Activated CD4-positive, alpha-beta memory T cell treated with anti-CD3 and anti-CD28 coated beads for 36 hours (primary cell): ENCODE measurements at regions of chr12 and their contacts with region 1.

Region 1: GRCh38 chr12:54279866-54280467 is at the start of gene CBX5:
- DNase-seq: peak; percentile 99
- H3K4me3 Mint-ChIP-seq: no peak within 1 kb of the TSS
- H3K27ac Mint-ChIP-seq: no peak within 1 kb of the TSS
- H3K4me1 Mint-ChIP-seq: peaks cover 51% of the 10 kb centered on the region
- H3K27me3 Mint-ChIP-seq: no peaks in the 10 kb centered on the region
- total RNA-seq, gene CBX5: 132 to 138 TPM

Region 2: GRCh38 chr12:53727310-53728041 is 552.5 kb before region 1 on chr12 and contains the start of gene CALCOCO1:
- CTCF ChIA-PET with region 1: no interaction called
- POLR2A ChIA-PET with region 1: no interaction called
- intact Hi-C with region 1: loop called (anchors 10 kb)
- DNase-seq: peak; percentile 99
- H3K4me3 Mint-ChIP-seq: peak within 1 kb of the TSS; percentile 87
- H3K27ac Mint-ChIP-seq: peak within 1 kb of the TSS; percentile 77
- H3K4me1 Mint-ChIP-seq: peaks cover 19% of the 10 kb centered on the region
- H3K27me3 Mint-ChIP-seq: no peaks in the 10 kb centered on the region
- total RNA-seq, gene CALCOCO1: 21.2 to 23.7 TPM

Region 3: GRCh38 chr12:54240971-54241588 is 38.9 kb before region 1 on chr12:
- CTCF ChIA-PET with region 1: no interaction called
- POLR2A ChIA-PET with region 1: no interaction called
- intact Hi-C with region 1: loop called (anchors 1 kb)
- DNase-seq: peak; percentile 17
- H3K4me3 Mint-ChIP-seq: no peak overlapping the region
- H3K27ac Mint-ChIP-seq: peak overlapping the region; percentile 78
- H3K4me1 Mint-ChIP-seq: peaks cover 22% of the 10 kb centered on the region
- H3K27me3 Mint-ChIP-seq: no peaks in the 10 kb centered on the region

Region 4: DNA sequence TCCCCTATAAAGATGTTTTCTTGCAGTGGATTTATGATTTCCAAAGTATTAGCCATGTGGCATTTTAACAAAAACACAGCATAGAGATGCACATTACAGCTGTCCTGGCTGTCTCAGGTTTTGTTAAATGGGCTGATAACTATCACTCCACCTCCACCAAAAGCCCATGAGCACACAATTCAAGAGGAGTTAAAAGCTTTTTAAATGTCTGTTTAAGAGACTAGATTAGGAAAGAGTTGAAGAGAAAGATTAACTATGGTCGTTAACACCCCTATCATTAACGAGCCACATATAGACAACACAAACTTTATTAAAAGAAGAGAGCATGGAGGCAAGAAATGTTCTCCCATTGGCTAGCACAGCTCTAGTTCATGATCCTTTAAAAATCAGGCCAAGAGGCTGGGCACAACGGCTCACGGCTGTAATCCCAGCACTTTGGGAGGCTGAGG is 14.6 kb before region 1 on chr12:
- CTCF ChIA-PET with region 1: interaction called, 5 read pairs
- POLR2A ChIA-PET with region 1: interaction called, 15 read pairs
- intact Hi-C with region 1: no loop called
- DNase-seq: no peak
- H3K4me3 Mint-ChIP-seq: no peak overlapping the region
- H3K27ac Mint-ChIP-seq: no peak overlapping the region
- H3K4me1 Mint-ChIP-seq: peaks cover 44% of the 10 kb centered on the region
- H3K27me3 Mint-ChIP-seq: no peaks in the 10 kb centered on the region

Region 5: GRCh38 chr12:54359033-54359761 is 79.2 kb after region 1 on chr12:
- CTCF ChIA-PET with region 1: interaction called, 4 read pairs
- POLR2A ChIA-PET with region 1: interaction called, 23 read pairs
- intact Hi-C with region 1: loop called (anchors 1 kb)
- DNase-seq: peak; percentile 97
- H3K4me3 Mint-ChIP-seq: no peak overlapping the region
- H3K27ac Mint-ChIP-seq: no peak overlapping the region
- H3K4me1 Mint-ChIP-seq: peaks cover 16% of the 10 kb centered on the region
- H3K27me3 Mint-ChIP-seq: no peaks in the 10 kb centered on the region

Region 6: GRCh38 chr12:54526812-54527630 is 247.1 kb after region 1 on chr12:
- CTCF ChIA-PET with region 1: no interaction called
- POLR2A ChIA-PET with region 1: no interaction called
- intact Hi-C with region 1: loop called (anchors 10 kb)
- DNase-seq: peak; percentile 64
- H3K4me3 Mint-ChIP-seq: no peak overlapping the region
- H3K27ac Mint-ChIP-seq: peak overlapping the region; percentile 9
- H3K4me1 Mint-ChIP-seq: peaks cover 23% of the 10 kb centered on the region
- H3K27me3 Mint-ChIP-seq: no peaks in the 10 kb centered on the region

Region 7: DNA sequence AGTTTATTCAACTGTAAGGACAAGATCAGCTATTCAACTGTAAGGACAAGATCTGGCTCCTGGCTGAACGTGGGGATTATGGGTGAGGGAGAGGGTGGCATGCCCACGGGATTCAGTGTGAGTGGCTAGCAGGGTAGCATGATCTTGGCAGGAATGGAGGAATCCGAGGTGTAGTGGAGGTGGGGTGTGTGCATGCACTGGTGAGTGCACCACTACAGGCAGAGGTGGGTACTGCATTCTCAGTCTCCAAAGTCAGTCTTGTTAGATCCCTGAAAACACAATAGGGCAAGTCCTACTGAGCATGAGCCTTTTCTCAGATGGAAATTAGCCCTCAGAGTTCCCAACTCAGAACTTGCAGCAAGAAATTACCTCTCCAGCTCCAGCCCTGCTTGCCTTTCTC is 400.4 kb after region 1 on chr12:
- CTCF ChIA-PET with region 1: no interaction called
- POLR2A ChIA-PET with region 1: no interaction called
- intact Hi-C with region 1: no loop called
- DNase-seq: peak; percentile 42
- H3K4me3 Mint-ChIP-seq: no peak overlapping the region
- H3K27ac Mint-ChIP-seq: no peak overlapping the region
- H3K4me1 Mint-ChIP-seq: no peaks in the 10 kb centered on the region
- H3K27me3 Mint-ChIP-seq: peaks cover 37% of the 10 kb centered on the region